CD14-positive monocyte (primary cell): ENCODE measurements at regions of chr3 and their contacts with region 1.

Region 1: GRCh38 chr3:113495035-113495434 is 19.9 kb downstream of the SPICE1 start:
- DNase-seq: peak in 2 of 3 donors; percentile 11 to 32
- H3K4me3 ChIP-seq: no peak overlapping the region
- H3K4me3 Mint-ChIP-seq: no peak overlapping the region
- H3K27ac ChIP-seq: no peak overlapping the region
- H3K27ac Mint-ChIP-seq: peak overlapping the region in 1 of 7 donors; percentile 3
- H3K4me1 ChIP-seq: no peaks in the 10 kb centered on the region
- H3K4me1 Mint-ChIP-seq: no peaks in the 10 kb centered on the region
- H3K27me3 ChIP-seq: no peaks in the 10 kb centered on the region
- H3K27me3 Mint-ChIP-seq: peaks cover 0 to 2% (median 0%) of the 10 kb centered on the region in 3 donors
- CTCF ChIP-seq: no peak

Region 2: GRCh38 chr3:113104761-113105464 is 390.1 kb before region 1 on chr3:
- intact Hi-C with region 1: no loop called
- DNase-seq: no peak
- H3K4me3 ChIP-seq: no peak overlapping the region
- H3K4me3 Mint-ChIP-seq: no peak overlapping the region
- H3K27ac ChIP-seq: no peak overlapping the region
- H3K27ac Mint-ChIP-seq: no peak overlapping the region
- H3K4me1 ChIP-seq: peaks cover 15 to 24% of the 10 kb centered on the region in 2 donors
- H3K4me1 Mint-ChIP-seq: peaks cover 21% of the 10 kb centered on the region
- H3K27me3 ChIP-seq: no peaks in the 10 kb centered on the region
- H3K27me3 Mint-ChIP-seq: peaks cover 0 to 2% (median 0%) of the 10 kb centered on the region in 3 donors
- CTCF ChIP-seq: no peak

Region 3: DNA sequence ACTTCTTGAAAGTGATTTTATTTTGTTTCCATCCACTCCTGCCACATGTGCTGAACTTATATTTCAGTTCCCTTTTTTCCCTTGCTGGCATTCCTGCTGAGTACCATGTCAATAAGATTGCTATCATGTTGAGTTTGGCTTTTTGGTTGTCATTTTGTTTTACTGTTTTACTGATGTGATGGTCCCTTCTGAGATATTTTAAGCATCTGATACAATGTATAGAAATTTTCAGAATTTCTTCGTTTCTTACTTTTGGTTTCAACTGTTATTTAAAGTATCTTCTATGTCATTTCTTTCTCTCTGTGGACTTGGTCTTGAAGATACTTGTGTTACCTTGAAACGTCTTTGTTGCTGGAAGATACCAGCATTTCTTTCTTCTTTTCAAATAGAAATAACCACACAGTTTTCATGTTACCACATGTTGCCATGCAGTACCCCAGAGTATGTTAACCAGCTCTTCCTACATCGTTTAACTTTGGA is 51.4 kb after region 1 on chr3:
- intact Hi-C with region 1: no loop called
- DNase-seq: no peak
- H3K4me3 ChIP-seq: no peak overlapping the region
- H3K4me3 Mint-ChIP-seq: no peak overlapping the region
- H3K27ac ChIP-seq: no peak overlapping the region
- H3K27ac Mint-ChIP-seq: no peak overlapping the region
- H3K4me1 ChIP-seq: peaks cover 0 to 2% of the 10 kb centered on the region in 2 donors
- H3K4me1 Mint-ChIP-seq: peaks cover 7% of the 10 kb centered on the region
- H3K27me3 ChIP-seq: no peaks in the 10 kb centered on the region
- H3K27me3 Mint-ChIP-seq: peaks cover 0 to 3% (median 0%) of the 10 kb centered on the region in 3 donors
- CTCF ChIP-seq: no peak

Region 4: GRCh38 chr3:113575206-113575605 is 80.2 kb after region 1 on chr3:
- intact Hi-C with region 1: loop called (anchors 5 to 10 kb)
- DNase-seq: no peak
- H3K4me3 ChIP-seq: no peak overlapping the region
- H3K4me3 Mint-ChIP-seq: no peak overlapping the region
- H3K27ac ChIP-seq: no peak overlapping the region
- H3K27ac Mint-ChIP-seq: no peak overlapping the region
- H3K4me1 ChIP-seq: no peaks in the 10 kb centered on the region
- H3K4me1 Mint-ChIP-seq: peaks cover 4% of the 10 kb centered on the region
- H3K27me3 ChIP-seq: no peaks in the 10 kb centered on the region
- H3K27me3 Mint-ChIP-seq: peaks cover 0 to 2% (median 0%) of the 10 kb centered on the region in 3 donors
- CTCF ChIP-seq: no peak

Region 5: DNA sequence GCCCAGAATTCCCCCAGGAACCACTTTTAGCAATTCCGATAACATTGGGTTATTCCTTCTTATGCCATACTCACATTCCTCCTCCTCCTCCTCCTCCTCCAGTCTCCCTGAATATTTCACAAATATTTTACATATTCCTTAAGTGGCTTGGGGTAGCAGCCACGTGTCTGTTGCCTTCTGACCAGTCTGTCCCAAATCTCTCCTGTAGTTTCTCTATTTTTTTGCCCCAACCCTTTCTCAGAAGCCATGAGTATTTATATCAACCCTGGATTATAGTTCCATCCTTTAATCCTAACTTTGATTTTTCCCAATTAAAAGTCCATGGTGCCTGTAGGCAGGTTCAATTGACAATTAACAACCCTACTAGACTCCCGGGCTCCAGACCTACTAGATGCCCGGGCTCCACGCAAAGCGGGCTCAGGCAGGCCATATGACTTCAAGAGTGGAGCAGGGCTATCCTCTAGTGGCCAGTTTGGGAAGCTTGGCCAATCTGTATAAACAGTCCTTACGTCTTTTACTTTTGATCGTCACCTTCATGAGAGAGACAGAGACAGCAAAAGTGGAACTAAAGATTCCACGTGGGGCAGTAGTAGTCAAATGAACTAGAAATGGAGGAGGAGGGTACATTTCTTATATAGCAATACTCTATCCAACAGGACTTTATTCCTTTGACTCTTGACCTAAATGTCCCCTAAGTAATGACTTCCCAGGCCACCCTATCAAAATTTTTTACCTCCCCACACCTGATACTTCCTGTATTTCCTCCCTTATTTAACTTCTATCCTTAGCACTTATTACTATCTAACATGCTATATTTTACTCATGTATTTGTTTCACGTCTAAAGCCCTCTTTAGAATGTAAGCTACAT is 131.7 kb after region 1 on chr3:
- intact Hi-C with region 1: loop called (anchors 2 to 5 kb)
- DNase-seq: peak; percentile 64 to 82 (median 76)
- H3K4me3 ChIP-seq: peak overlapping the region in 2 of 3 experiments; percentile 14 to 68
- H3K4me3 Mint-ChIP-seq: peak overlapping the region; percentile 75 to 89
- H3K27ac ChIP-seq: peak overlapping the region in 1 of 2 donors; percentile 77
- H3K27ac Mint-ChIP-seq: peak overlapping the region; percentile 89 to 94 (median 93)
- H3K4me1 ChIP-seq: peaks cover 23 to 34% of the 10 kb centered on the region in 2 donors
- H3K4me1 Mint-ChIP-seq: peaks cover 38% of the 10 kb centered on the region
- H3K27me3 ChIP-seq: no peaks in the 10 kb centered on the region
- H3K27me3 Mint-ChIP-seq: peaks cover 0 to 4% (median 1%) of the 10 kb centered on the region in 3 donors
- CTCF ChIP-seq: peak; percentile 95